HCT116 (cell line): ENCODE measurements at regions of chr3 and their contacts with region 1.

Region 1: DNA sequence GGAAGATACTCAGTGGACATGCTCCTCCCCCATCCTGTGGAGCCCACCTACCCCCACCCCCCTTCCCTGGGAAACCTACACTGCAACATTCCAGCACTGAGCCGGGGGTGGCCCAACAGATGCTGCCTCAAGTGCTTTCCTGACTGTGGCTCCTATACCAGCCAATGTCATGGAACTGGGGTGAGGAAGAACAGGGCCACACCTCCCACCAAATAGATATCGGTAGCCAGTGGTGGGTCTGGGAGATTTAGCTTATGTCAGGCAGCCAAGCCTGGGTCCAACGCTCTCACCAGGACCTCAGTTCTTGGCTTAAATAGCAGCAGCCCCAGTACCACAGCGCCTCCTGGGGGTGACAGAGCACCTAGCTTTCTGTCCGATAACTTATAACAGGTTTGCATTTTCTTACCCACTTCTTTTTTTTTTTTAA is 30.3 kb downstream of the CDC25A start:
- DNase-seq: peak; percentile 48
- ATAC-seq: peak; percentile 63
- H3K4me3 ChIP-seq: no peak overlapping the region
- H3K27ac ChIP-seq: peak overlapping the region; percentile 51; the same call in 1 of the 2 replicates
- H3K4me1 ChIP-seq: peaks cover 36 to 55% of the 10 kb centered on the region in 2 experiments
- H3K27me3 ChIP-seq: no peaks in the 10 kb centered on the region
- CTCF ChIP-seq: peak; percentile 47 to 92 (median 86); a peak in 5 of 6 replicates
- POLR2A ChIP-seq: no peak
- RAD21 ChIP-seq: peak; percentile 74

Region 2: GRCh38 chr3:47522082-47522987 is 635.6 kb before region 1 on chr3:
- CTCF ChIA-PET with region 1: interaction called, 11 read pairs
- POLR2A ChIA-PET with region 1: no interaction called
- RAD21 ChIA-PET with region 1: no interaction called
- intact Hi-C with region 1: loop called (anchors 2 kb)
- DNase-seq: peak; percentile 91
- ATAC-seq: peak; percentile 92
- H3K4me3 ChIP-seq: no peak overlapping the region
- H3K27ac ChIP-seq: no peak overlapping the region
- H3K4me1 ChIP-seq: peaks cover 12 to 18% of the 10 kb centered on the region in 2 experiments
- H3K27me3 ChIP-seq: no peaks in the 10 kb centered on the region
- CTCF ChIP-seq: peak; percentile 79 to 96 (median 84)
- POLR2A ChIP-seq: no peak
- RAD21 ChIP-seq: peak; percentile 100

Region 3: GRCh38 chr3:47824541-47825473 is 333.2 kb before region 1 on chr3:
- CTCF ChIA-PET with region 1: interaction called, 16 read pairs
- POLR2A ChIA-PET with region 1: no interaction called
- RAD21 ChIA-PET with region 1: no interaction called
- intact Hi-C with region 1: no loop called
- DNase-seq: peak; percentile 47
- ATAC-seq: peak; percentile 98
- H3K4me3 ChIP-seq: peak overlapping the region; percentile 85 to 86
- H3K27ac ChIP-seq: peak overlapping the region; percentile 81
- H3K4me1 ChIP-seq: peaks cover 10 to 21% of the 10 kb centered on the region in 2 experiments; a peak in 3 of 4 replicates
- H3K27me3 ChIP-seq: no peaks in the 10 kb centered on the region
- CTCF ChIP-seq: peak; percentile 52 to 86 (median 72); a peak in 5 of 6 replicates
- POLR2A ChIP-seq: peak; percentile 48
- RAD21 ChIP-seq: peak; percentile 57

Region 4: DNA sequence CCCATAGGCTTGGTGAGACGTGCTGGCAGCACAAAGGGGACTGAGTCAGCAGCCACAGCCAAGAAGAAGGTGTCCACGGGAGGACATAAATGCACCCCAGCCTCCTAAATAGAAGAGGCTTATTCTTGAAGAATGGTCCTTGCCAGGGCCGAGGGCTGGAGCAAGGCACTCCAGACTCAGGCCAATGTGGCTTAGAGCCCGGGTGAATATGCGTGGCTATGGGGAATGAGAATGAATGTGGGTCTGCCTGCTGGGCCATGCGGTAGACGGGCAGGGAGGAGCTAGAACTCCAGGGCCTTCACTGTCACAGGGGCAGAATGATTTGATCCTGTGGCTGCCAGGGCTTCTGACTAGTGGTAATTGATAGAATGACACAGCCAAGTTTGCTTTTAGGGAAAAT is 321.0 kb before region 1 on chr3:
- CTCF ChIA-PET with region 1: interaction called, 47 read pairs
- POLR2A ChIA-PET with region 1: no interaction called
- RAD21 ChIA-PET with region 1: interaction called in 1 of 2 experiments, 3 read pairs
- intact Hi-C with region 1: no loop called
- DNase-seq: no peak
- ATAC-seq: peak; percentile 16; the same call in 1 of the 2 replicates
- H3K4me3 ChIP-seq: no peak overlapping the region
- H3K27ac ChIP-seq: no peak overlapping the region
- H3K4me1 ChIP-seq: no peaks in the 10 kb centered on the region
- H3K27me3 ChIP-seq: no peaks in the 10 kb centered on the region
- CTCF ChIP-seq: no peak
- POLR2A ChIP-seq: no peak
- RAD21 ChIP-seq: no peak

Region 5: DNA sequence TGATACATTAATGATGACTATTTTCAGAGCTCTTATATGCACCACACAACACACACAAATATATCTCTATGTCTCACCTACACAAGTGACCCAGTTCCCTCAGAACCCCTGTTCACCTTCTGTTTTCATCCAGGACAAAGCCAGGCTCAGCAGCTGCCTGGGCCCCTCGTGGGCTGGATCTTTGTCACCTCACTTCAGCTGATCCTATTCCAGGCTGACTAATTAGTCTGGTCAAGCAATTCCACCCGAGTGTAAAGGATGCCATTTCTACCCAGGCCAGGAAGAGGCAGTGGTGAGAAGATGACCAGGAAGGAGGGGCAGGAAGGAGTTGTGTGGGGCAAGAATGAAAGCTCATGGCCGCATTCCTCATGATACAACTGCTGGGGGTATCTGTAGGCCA is 292.8 kb before region 1 on chr3:
- CTCF ChIA-PET with region 1: interaction called, 10 read pairs
- POLR2A ChIA-PET with region 1: no interaction called
- RAD21 ChIA-PET with region 1: no interaction called
- intact Hi-C with region 1: no loop called
- DNase-seq: no peak
- ATAC-seq: peak; percentile 65; the same call in 1 of the 2 replicates
- H3K4me3 ChIP-seq: no peak overlapping the region
- H3K27ac ChIP-seq: no peak overlapping the region
- H3K4me1 ChIP-seq: no peaks in the 10 kb centered on the region
- H3K27me3 ChIP-seq: no peaks in the 10 kb centered on the region
- CTCF ChIP-seq: peak in 1 of 3 experiments; percentile 28; a peak in 1 of 6 replicates
- POLR2A ChIP-seq: no peak
- RAD21 ChIP-seq: 0 out of 2 replicates have a peak, but pooled peaks have one; percentile 11

Region 6: GRCh38 chr3:48598323-48599076 is 440.5 kb after region 1 on chr3:
- CTCF ChIA-PET with region 1: no interaction called
- POLR2A ChIA-PET with region 1: no interaction called
- RAD21 ChIA-PET with region 1: no interaction called
- intact Hi-C with region 1: no loop called
- DNase-seq: no peak
- ATAC-seq: no peak
- H3K4me3 ChIP-seq: no peak overlapping the region
- H3K27ac ChIP-seq: no peak overlapping the region; the same call in 1 of the 2 replicates
- H3K4me1 ChIP-seq: peaks cover 11 to 21% of the 10 kb centered on the region in 2 experiments
- H3K27me3 ChIP-seq: no peaks in the 10 kb centered on the region
- CTCF ChIP-seq: no peak
- POLR2A ChIP-seq: no peak
- RAD21 ChIP-seq: no peak